CD4-positive, alpha-beta T cell (primary cell): ENCODE measurements at regions of chr19 and their contacts with region 1.

Region 1: GRCh38 chr19:53195265-53195903 is 2.2 kb upstream of the ZNF665 start:
- DNase-seq: peak; percentile 53 to 89 (median 66)
- ATAC-seq: peak; percentile 59
- H3K4me3 ChIP-seq: no peak overlapping the region
- H3K4me3 Mint-ChIP-seq: peak overlapping the region; percentile 95
- H3K27ac ChIP-seq: no peak overlapping the region
- H3K27ac Mint-ChIP-seq: peak overlapping the region; percentile 92
- H3K4me1 ChIP-seq: peaks cover 28% of the 10 kb centered on the region
- H3K4me1 Mint-ChIP-seq: peaks cover 42% of the 10 kb centered on the region
- H3K27me3 ChIP-seq: peaks cover 0 to 2% of the 10 kb centered on the region in 2 experiments
- H3K27me3 Mint-ChIP-seq: no peaks in the 10 kb centered on the region
- CTCF ChIP-seq: peak; percentile 97

Region 2: DNA sequence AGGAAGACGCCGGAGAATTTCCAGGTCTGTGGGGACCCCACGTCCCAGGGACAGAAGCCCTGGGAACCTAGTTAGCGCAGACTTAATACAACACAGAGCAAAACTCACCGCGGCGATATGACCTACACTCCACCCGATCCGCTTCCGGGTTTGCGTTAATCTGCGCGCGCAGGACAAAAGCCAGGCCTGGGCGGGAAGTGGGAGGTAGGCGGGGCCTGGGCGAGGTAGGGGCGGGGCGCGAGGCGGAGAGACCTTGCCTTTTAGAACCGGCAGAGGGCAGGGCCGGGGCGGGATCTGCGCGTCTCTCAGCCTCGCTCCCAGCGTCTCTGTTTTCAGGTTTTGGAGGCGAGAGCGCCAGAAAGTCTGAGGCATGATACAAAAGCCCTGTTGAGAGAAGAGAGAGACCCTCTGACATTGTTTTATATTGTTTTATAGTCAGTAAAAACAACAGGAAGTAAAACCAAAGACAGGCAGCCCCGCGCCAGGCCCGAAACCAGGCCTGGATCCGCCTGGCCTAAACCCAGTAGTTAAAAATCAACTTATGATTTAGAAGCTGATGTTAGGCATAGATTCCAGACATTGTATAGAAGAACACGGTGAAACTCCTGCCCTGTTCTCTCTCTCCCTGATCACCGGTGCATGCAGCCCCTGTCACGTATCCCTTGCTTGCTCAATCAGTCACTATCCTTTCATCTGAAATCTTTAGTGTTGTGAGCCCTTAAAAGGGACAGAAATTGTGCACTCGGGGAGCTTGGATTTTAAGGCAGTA is 460.3 kb before region 1 on chr19 and contains the start of gene ZNF611:
- CTCF ChIA-PET with region 1: no interaction called
- POLR2A ChIA-PET with region 1: no interaction called
- intact Hi-C with region 1: loop called in 1 of 2 experiments (anchors 5 kb)
- DNase-seq: peak; percentile 98 to 100 (median 99)
- ATAC-seq: peak; percentile 97
- H3K4me3 ChIP-seq: peak within 1 kb of the TSS; percentile 98
- H3K4me3 Mint-ChIP-seq: peak within 1 kb of the TSS; percentile 95
- H3K27ac ChIP-seq: peak within 1 kb of the TSS; percentile 74 to 93
- H3K27ac Mint-ChIP-seq: peak within 1 kb of the TSS; percentile 96
- H3K4me1 ChIP-seq: peaks cover 23% of the 10 kb centered on the region
- H3K4me1 Mint-ChIP-seq: peaks cover 28% of the 10 kb centered on the region
- H3K27me3 ChIP-seq: no peaks in the 10 kb centered on the region
- H3K27me3 Mint-ChIP-seq: no peaks in the 10 kb centered on the region
- CTCF ChIP-seq: peak; percentile 70
- total RNA-seq, gene ZNF611: 14.6 to 15.5 TPM

Region 3: DNA sequence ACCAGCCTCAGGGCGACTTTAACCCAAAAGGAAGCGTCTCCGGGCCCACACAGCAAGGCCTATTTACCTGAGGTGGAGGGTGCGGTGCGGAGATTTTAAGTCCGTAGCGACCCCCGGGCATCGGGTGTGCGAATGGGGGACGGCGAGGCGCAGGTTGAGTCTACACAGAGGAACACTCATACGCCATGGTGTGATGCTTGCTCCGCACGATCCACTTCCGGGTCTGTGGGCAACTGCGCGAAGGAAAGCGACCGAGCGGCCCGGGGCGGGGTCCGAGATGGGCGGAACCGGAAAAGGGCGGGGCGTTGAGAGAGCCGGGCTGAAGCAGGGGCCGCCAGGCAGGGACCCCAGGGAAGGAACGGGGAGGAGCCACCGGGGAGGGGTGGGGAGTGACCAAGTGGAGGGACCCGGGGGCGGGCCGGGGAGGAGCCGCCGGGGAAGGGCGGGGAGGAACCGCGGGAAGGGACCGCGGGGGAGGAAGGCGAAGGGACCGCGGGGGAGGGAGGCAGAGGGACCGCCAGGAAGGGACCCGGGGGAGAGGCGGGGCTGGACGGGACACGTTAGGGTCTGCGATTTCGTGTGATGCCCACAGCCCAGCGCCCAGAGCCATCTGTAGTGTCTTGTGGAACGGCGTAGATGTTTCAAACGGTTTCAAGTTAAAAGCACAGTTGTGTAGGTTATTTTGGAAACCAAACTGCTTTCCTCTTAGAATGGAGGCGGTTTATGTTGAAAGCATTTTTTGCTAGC is 92.0 kb before region 1 on chr19 and contains the start of gene ZNF160:
- CTCF ChIA-PET with region 1: no interaction called
- POLR2A ChIA-PET with region 1: no interaction called
- intact Hi-C with region 1: loop called (anchors 1 to 5 kb)
- DNase-seq: peak; percentile 97 to 100 (median 99)
- ATAC-seq: peak; percentile 90
- H3K4me3 ChIP-seq: peak within 1 kb of the TSS; percentile 81
- H3K4me3 Mint-ChIP-seq: peak within 1 kb of the TSS; percentile 97
- H3K27ac ChIP-seq: peak within 1 kb of the TSS; percentile 85 to 90
- H3K27ac Mint-ChIP-seq: peak within 1 kb of the TSS; percentile 96
- H3K4me1 ChIP-seq: peaks cover 27% of the 10 kb centered on the region
- H3K4me1 Mint-ChIP-seq: peaks cover 45% of the 10 kb centered on the region
- H3K27me3 ChIP-seq: no peaks in the 10 kb centered on the region
- H3K27me3 Mint-ChIP-seq: no peaks in the 10 kb centered on the region
- CTCF ChIP-seq: no peak
- total RNA-seq, gene ZNF160: 42.1 to 45.5 TPM

Region 4: GRCh38 chr19:53333463-53334449 is 138.4 kb after region 1 on chr19 and contains the start of gene ZNF845:
- CTCF ChIA-PET with region 1: no interaction called
- POLR2A ChIA-PET with region 1: interaction called, 5 read pairs
- intact Hi-C with region 1: loop called (anchors 1 to 5 kb)
- DNase-seq: peak; percentile 91 to 99 (median 95)
- ATAC-seq: peak; percentile 97
- H3K4me3 ChIP-seq: peak within 1 kb of the TSS; percentile 82
- H3K4me3 Mint-ChIP-seq: peak within 1 kb of the TSS; percentile 95
- H3K27ac ChIP-seq: peak within 1 kb of the TSS in 1 of 2 donors; percentile 72
- H3K27ac Mint-ChIP-seq: peak within 1 kb of the TSS; percentile 84
- H3K4me1 ChIP-seq: peaks cover 17% of the 10 kb centered on the region
- H3K4me1 Mint-ChIP-seq: peaks cover 22% of the 10 kb centered on the region
- H3K27me3 ChIP-seq: peaks cover 0 to 4% of the 10 kb centered on the region in 2 experiments
- H3K27me3 Mint-ChIP-seq: peaks cover 8% of the 10 kb centered on the region
- CTCF ChIP-seq: no peak
- total RNA-seq, gene ZNF845: 7.5 to 8.0 TPM

Region 5: GRCh38 chr19:53431399-53432087 is 236.2 kb after region 1 on chr19 and contains the start of gene ZNF761:
- CTCF ChIA-PET with region 1: no interaction called
- POLR2A ChIA-PET with region 1: interaction called, 3 read pairs
- intact Hi-C with region 1: loop called (anchors 1 to 5 kb)
- DNase-seq: peak; percentile 94 to 99 (median 98)
- ATAC-seq: peak; percentile 96
- H3K4me3 ChIP-seq: peak within 1 kb of the TSS; percentile 88
- H3K4me3 Mint-ChIP-seq: peak within 1 kb of the TSS; percentile 98
- H3K27ac ChIP-seq: peak within 1 kb of the TSS; percentile 51 to 80
- H3K27ac Mint-ChIP-seq: peak within 1 kb of the TSS; percentile 96
- H3K4me1 ChIP-seq: peaks cover 15% of the 10 kb centered on the region
- H3K4me1 Mint-ChIP-seq: peaks cover 41% of the 10 kb centered on the region
- H3K27me3 ChIP-seq: no peaks in the 10 kb centered on the region
- H3K27me3 Mint-ChIP-seq: no peaks in the 10 kb centered on the region
- CTCF ChIP-seq: no peak
- total RNA-seq, gene ZNF761: 4.5 to 5.6 TPM

Region 6: DNA sequence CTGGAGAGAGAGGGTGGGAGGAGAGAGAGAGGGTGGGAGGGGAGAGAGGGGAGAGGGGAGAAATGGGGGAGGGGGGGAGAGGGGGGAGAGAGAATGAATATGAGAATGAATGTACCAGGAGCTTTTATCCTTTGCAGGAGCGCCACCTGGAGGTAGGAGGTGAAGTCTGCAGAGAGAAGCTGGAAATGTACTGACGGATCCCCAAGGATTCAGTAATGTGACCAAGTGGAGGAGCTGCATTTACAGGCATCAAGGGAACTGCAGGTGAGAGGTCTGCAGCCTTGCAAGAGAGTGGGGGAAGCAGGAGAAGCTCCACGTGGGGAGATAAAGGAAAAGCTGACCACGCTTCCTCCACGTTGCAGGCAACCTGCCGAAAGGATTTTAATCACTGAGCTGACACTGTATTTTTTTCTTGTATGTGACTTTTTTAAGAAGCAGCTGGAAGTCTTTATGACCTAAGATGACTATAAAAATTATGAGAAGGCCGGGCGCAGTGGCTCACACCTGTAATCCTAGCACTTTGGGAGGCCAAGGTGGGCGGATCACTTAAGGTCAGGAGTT is 834.6 kb after region 1 on chr19:
- CTCF ChIA-PET with region 1: no interaction called
- POLR2A ChIA-PET with region 1: no interaction called
- intact Hi-C with region 1: loop called in 1 of 2 experiments (anchors 5 kb)
- DNase-seq: peak; percentile 30 to 75 (median 44)
- ATAC-seq: no peak
- H3K4me3 ChIP-seq: no peak overlapping the region
- H3K4me3 Mint-ChIP-seq: no peak overlapping the region
- H3K27ac ChIP-seq: no peak overlapping the region
- H3K27ac Mint-ChIP-seq: no peak overlapping the region
- H3K4me1 ChIP-seq: peaks cover 2% of the 10 kb centered on the region
- H3K4me1 Mint-ChIP-seq: no peaks in the 10 kb centered on the region
- H3K27me3 ChIP-seq: peaks cover 2 to 3% of the 10 kb centered on the region in 2 experiments
- H3K27me3 Mint-ChIP-seq: peaks cover 41% of the 10 kb centered on the region
- CTCF ChIP-seq: peak; percentile 50